GM18951 (cell line): ENCODE measurements at regions of chr6 and their contacts with region 1.

Region 1: GRCh38 chr6:24589334-24589733 is 56.7 kb downstream of the KIAA0319 start:
- POLR2A ChIP-seq: no peak

Region 2: GRCh38 chr6:24283043-24283985 is 306.0 kb before region 1 on chr6:
- in situ Hi-C with region 1: no loop called
- POLR2A ChIP-seq: no peak

Region 3: GRCh38 chr6:24306595-24307335 is 282.6 kb before region 1 on chr6:
- in situ Hi-C with region 1: no loop called
- POLR2A ChIP-seq: no peak

Region 4: DNA sequence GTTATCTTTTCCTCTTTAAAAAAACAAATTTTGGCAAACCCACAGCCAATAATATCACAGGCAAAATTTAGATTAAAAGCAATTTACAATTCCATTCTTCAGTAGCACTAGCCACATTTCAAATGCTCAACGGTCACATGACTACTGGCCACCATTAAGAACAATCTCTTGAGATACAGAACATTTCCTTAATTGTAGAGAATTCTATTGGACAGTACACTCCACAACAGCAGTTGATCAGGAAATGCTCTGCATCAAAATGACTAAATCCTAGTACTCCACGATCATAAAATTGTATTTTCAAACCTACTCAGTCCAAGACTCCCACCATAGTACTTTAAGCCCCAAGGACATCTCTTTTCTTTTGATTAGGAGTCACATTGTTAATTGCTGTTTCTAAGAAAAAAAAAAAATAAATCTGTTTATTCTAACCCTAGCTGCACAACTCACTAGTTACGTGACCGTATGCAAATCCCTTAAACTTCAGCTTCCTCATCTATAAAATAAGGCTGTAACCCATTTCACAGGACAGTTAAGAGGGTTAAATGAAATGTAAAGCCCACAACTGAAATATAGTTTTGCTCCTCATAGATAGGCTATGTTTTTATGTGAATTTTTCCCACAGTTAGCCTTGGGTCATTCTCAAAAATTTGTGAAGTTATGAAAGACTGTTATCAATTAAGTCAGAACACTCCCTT is 119.8 kb after region 1 on chr6:
- in situ Hi-C with region 1: loop called (anchors 5 kb)
- POLR2A ChIP-seq: no peak

Region 5: GRCh38 chr6:25027221-25027916 is 438.0 kb after region 1 on chr6:
- in situ Hi-C with region 1: no loop called
- POLR2A ChIP-seq: no peak